T-cell (primary cell): ENCODE measurements at regions of chr16 and their contacts with region 1.

Region 1: GRCh38 chr16:70324998-70325747 is 21.5 kb upstream of the DDX19A start:
- DNase-seq: no peak
- ATAC-seq: no peak
- H3K4me3 ChIP-seq: no peak overlapping the region
- H3K4me3 Mint-ChIP-seq: no peak overlapping the region
- H3K27ac ChIP-seq: no peak overlapping the region
- H3K27ac Mint-ChIP-seq: peak overlapping the region in 1 of 2 donors; percentile 16
- H3K4me1 ChIP-seq: no peaks in the 10 kb centered on the region
- H3K4me1 Mint-ChIP-seq: no peaks in the 10 kb centered on the region
- H3K27me3 ChIP-seq: no peaks in the 10 kb centered on the region
- H3K27me3 Mint-ChIP-seq: no peaks in the 10 kb centered on the region

Region 2: GRCh38 chr16:70359552-70359951 is 34.4 kb after region 1 on chr16:
- CTCF ChIA-PET with region 1: no interaction called
- POLR2A ChIA-PET with region 1: no interaction called
- DNase-seq: no peak
- ATAC-seq: no peak
- H3K4me3 ChIP-seq: no peak overlapping the region
- H3K4me3 Mint-ChIP-seq: no peak overlapping the region
- H3K27ac ChIP-seq: no peak overlapping the region
- H3K27ac Mint-ChIP-seq: no peak overlapping the region
- H3K4me1 ChIP-seq: no peaks in the 10 kb centered on the region
- H3K4me1 Mint-ChIP-seq: no peaks in the 10 kb centered on the region
- H3K27me3 ChIP-seq: no peaks in the 10 kb centered on the region
- H3K27me3 Mint-ChIP-seq: no peaks in the 10 kb centered on the region

Region 3: DNA sequence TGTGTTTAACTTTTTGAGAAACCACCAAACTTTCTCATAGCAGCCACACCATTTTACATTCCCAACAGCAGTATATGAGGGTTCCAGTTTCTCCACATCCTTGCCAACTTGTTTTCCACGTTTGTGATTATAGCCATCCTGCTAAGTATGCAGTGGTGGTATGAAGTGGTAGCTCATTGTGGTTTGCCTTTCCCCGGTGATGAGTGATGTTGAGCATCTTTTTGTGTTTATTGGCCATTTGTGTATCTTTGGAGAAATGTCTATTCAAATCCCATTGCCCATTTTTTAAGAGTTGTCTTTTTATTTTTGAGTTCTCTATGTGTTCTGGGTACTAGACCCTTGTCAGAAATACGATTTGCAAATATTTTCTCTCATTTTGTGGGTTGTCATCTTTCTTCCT is 215.8 kb after region 1 on chr16:
- CTCF ChIA-PET with region 1: no interaction called
- POLR2A ChIA-PET with region 1: interaction called in 1 of 2 experiments, 19 read pairs
- DNase-seq: no peak
- ATAC-seq: no peak
- H3K4me3 ChIP-seq: no peak overlapping the region
- H3K4me3 Mint-ChIP-seq: no peak overlapping the region
- H3K27ac ChIP-seq: no peak overlapping the region
- H3K27ac Mint-ChIP-seq: no peak overlapping the region
- H3K4me1 ChIP-seq: no peaks in the 10 kb centered on the region
- H3K4me1 Mint-ChIP-seq: peaks cover 0 to 26% (median 14%) of the 10 kb centered on the region in 3 donors
- H3K27me3 ChIP-seq: no peaks in the 10 kb centered on the region
- H3K27me3 Mint-ChIP-seq: no peaks in the 10 kb centered on the region

Region 4: DNA sequence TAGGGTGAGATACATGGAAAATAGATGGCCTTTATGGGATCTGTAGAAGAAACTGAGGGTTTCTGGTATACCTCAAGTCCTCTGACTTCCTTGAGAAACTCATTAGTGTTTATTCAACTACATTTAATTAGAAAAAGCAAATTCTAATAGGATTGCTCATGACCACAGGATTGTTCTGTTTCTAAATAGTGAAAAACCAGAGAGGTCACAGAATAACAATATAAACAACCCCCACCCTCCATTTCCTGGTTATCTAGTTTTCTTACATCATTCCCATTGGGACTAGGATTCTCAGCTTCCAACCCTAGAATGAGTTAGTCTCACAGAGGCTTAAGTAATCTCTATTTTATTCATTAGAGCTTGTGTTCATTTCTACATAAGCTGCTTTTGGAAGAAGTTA is 228.5 kb after region 1 on chr16:
- CTCF ChIA-PET with region 1: no interaction called
- POLR2A ChIA-PET with region 1: no interaction called
- DNase-seq: no peak
- ATAC-seq: no peak
- H3K4me3 ChIP-seq: no peak overlapping the region
- H3K4me3 Mint-ChIP-seq: no peak overlapping the region
- H3K27ac ChIP-seq: no peak overlapping the region
- H3K27ac Mint-ChIP-seq: no peak overlapping the region
- H3K4me1 ChIP-seq: no peaks in the 10 kb centered on the region
- H3K4me1 Mint-ChIP-seq: peaks cover 4 to 20% (median 16%) of the 10 kb centered on the region in 3 donors
- H3K27me3 ChIP-seq: no peaks in the 10 kb centered on the region
- H3K27me3 Mint-ChIP-seq: no peaks in the 10 kb centered on the region